SK-N-SH (cell line): ENCODE measurements at regions of chr11 and their contacts with region 1.

Region 1: GRCh38 chr11:128290106-128290840 is 297.1 kb downstream of the ETS1 start:
- DNase-seq: peak; percentile 68
- H3K4me3 ChIP-seq: no peak overlapping the region; a peak in 1 of 4 replicates
- H3K27ac ChIP-seq: peak overlapping the region; percentile 42 to 60; a peak in 3 of 4 replicates
- H3K4me1 ChIP-seq: peaks cover 0 to 16% of the 10 kb centered on the region in 2 experiments; a peak in 2 of 4 replicates
- H3K27me3 ChIP-seq: no peaks in the 10 kb centered on the region
- CTCF ChIP-seq: peak; percentile 87
- EP300 ChIP-seq: no peak; a peak in 1 of 4 replicates
- RAD21 ChIP-seq: peak; percentile 99

Region 2: DNA sequence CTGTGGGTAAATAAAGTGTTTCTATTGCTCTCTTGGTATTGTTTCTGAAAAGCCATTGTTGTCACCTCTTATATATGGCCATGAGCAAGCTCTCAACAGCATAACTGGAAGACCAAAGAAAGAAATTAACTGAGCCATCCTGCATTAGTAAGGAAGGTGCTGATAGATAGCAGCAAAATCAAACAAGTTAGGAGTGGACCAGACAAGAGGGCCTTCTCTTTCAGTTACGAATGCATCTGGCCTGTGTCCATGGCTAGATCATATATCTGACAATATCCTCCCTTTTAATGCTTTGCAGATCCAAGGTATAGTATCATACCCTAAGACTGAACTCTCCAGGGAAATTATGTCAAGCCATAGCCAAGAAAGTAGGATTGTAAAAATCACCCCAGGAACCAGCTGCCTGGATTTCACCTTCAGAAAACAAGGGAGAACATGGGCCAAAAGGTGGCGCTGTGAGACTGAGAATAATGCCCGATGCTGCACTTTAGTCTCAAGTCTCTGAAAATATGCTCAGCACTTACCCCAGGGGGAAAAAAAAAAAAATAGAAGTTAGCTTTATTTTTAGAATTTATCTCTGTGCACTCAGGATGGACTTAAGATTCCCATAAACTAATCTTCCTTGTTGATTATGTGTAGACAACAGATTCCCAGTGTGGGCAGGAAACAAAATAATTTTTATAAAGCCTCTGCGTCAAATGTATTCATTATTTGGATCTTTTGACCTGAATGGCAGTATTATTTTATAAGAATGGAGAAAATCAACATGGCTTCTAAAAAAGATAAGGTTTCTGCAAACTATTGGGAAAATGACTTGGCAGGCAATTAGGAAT is 118.0 kb before region 1 on chr11:
- CTCF ChIA-PET with region 1: interaction called, 33 read pairs
- POLR2A ChIA-PET with region 1: no interaction called
- DNase-seq: peak; percentile 73
- H3K4me3 ChIP-seq: no peak overlapping the region; a peak in 1 of 4 replicates
- H3K27ac ChIP-seq: peak overlapping the region in 1 of 2 experiments; percentile 50; a peak in 2 of 4 replicates
- H3K4me1 ChIP-seq: peaks cover 3 to 5% of the 10 kb centered on the region in 2 experiments; a peak in 2 of 4 replicates
- H3K27me3 ChIP-seq: no peaks in the 10 kb centered on the region
- CTCF ChIP-seq: peak; percentile 87
- EP300 ChIP-seq: no peak
- RAD21 ChIP-seq: peak; percentile 98

Region 3: DNA sequence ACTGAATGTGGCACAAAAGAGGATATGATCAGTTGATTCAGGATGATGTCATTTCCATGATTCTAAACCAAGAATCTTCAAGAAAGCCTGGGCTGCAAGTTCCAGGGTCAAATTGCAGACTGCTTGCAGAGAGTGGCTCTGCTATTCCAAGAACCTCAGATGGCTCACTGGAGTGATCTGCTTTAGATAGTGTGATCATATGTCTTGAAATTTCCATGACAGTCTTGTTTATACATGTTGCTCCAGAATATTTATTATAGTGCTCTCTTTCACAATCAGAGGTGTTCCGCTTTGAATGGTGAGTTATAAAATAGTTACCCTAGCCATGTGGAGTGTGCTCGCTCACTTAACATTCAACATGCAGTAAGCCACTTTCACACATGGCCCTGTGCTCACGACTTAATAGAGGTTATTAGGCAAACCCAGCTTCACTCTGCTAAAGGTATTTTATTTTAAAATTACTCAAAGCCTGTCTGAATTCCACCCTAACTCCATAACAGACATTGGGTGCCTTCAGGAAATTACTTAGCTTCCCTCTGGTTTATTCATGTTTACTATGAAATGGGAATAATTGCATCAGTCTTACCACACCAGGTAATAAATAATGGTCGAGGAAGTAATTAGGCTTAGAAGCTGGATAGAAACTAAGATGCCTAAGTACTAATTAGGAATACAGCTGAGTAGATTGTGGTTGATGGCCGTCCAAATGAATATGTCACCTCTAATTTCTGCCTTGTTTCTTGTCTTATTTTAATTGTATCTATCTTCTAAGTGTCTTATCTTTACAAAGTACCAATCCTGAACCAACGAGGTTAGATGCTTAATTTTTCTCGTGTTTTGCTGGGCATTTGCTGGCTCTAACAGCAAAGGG is 109.2 kb after region 1 on chr11:
- CTCF ChIA-PET with region 1: interaction called, 13 read pairs
- POLR2A ChIA-PET with region 1: no interaction called
- DNase-seq: no peak
- H3K4me3 ChIP-seq: no peak overlapping the region
- H3K27ac ChIP-seq: peak overlapping the region; percentile 93 to 94
- H3K4me1 ChIP-seq: peaks cover 13 to 35% of the 10 kb centered on the region in 2 experiments
- H3K27me3 ChIP-seq: no peaks in the 10 kb centered on the region
- CTCF ChIP-seq: no peak
- EP300 ChIP-seq: peak in 1 of 2 experiments; percentile 78; a peak in 2 of 4 replicates
- RAD21 ChIP-seq: no peak

Region 4: DNA sequence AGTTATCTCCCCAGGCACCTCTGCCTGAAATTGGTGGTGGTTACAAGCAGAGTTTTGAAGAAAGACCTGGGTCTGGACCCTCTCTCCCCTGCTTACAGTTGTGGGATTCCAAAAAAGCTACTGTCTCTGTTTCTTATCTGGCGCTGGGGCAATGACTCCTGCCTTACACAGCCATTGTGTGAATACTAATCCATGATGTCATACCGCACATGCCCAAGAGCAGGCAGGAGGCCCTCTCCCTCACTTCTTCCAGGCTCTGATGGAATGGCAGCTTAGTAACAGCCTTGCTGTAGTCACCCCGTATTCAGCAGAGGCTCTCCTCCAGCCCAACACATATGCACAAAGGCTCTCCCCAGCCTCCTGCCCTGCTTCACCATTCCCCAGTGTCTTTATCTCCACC is 131.3 kb after region 1 on chr11:
- CTCF ChIA-PET with region 1: interaction called, 14 read pairs
- POLR2A ChIA-PET with region 1: no interaction called
- DNase-seq: peak; percentile 28
- H3K4me3 ChIP-seq: no peak overlapping the region
- H3K27ac ChIP-seq: peak overlapping the region; percentile 60 to 98
- H3K4me1 ChIP-seq: peaks cover 22 to 56% of the 10 kb centered on the region in 2 experiments; a peak in 3 of 4 replicates
- H3K27me3 ChIP-seq: no peaks in the 10 kb centered on the region
- CTCF ChIP-seq: no peak
- EP300 ChIP-seq: 0 out of 4 replicates have a peak, but pooled peaks of 1 of the 2 experiments have one; percentile 2
- RAD21 ChIP-seq: no peak

Region 5: DNA sequence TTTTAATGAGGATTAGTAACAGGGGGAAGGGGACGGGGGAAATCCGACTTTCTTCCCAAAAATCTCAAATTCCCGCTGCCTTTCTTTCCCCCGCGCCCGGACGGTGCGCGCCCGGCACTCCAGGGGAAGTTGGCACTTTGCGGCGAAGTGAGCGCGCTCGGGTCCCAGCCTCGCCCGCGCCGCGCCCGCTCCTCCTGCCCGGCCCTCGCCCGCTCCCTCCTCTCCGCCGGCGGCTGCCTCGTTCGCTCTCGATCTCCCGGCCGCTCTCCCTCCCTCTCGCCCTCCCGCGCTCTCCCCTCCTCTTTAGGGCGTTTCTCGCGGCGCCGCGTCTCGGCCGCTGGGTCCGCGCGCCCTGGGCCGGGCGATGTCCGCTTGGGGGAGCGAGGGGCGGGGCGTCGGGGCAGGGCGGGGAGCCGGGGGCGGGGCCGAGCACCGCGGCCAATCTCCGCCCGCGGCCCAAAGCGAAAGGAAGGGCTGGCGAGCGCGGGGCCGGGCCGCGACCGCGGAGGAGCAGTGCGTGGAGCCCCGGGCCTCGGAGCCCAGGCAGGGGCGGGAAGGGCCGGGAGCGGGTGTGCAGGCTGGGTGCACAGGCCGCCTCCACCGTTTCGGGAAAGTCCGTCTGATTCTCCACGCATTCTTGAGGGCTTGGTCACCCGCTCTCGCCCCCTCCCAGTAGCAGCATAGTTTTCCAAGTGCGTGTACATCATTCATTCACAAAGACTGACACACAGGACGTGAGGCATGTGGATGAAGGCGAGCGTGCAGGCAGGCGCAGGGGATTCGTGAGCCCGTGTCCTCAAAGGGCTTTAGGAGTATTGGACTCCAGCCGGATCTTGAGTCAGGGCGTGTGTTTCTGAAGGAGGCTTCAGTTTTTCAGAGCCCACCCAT is 232.0 kb after region 1 on chr11:
- CTCF ChIA-PET with region 1: interaction called, 11 read pairs
- POLR2A ChIA-PET with region 1: no interaction called
- DNase-seq: peak; percentile 97
- H3K4me3 ChIP-seq: peak overlapping the region; percentile 89 to 91
- H3K27ac ChIP-seq: peak overlapping the region; percentile 90 to 97
- H3K4me1 ChIP-seq: peaks cover 24 to 46% of the 10 kb centered on the region in 2 experiments
- H3K27me3 ChIP-seq: no peaks in the 10 kb centered on the region
- CTCF ChIP-seq: no peak
- EP300 ChIP-seq: peak in 1 of 2 experiments; percentile 92; a peak in 2 of 4 replicates
- RAD21 ChIP-seq: peak; percentile 24

Region 6: GRCh38 chr11:128552783-128553661 is 262.7 kb after region 1 on chr11:
- CTCF ChIA-PET with region 1: interaction called, 11 read pairs
- POLR2A ChIA-PET with region 1: no interaction called
- DNase-seq: no peak
- H3K4me3 ChIP-seq: no peak overlapping the region
- H3K27ac ChIP-seq: no peak overlapping the region
- H3K4me1 ChIP-seq: no peaks in the 10 kb centered on the region; a peak in 1 of 4 replicates
- H3K27me3 ChIP-seq: no peaks in the 10 kb centered on the region
- CTCF ChIP-seq: no peak
- EP300 ChIP-seq: no peak
- RAD21 ChIP-seq: no peak

Region 7: DNA sequence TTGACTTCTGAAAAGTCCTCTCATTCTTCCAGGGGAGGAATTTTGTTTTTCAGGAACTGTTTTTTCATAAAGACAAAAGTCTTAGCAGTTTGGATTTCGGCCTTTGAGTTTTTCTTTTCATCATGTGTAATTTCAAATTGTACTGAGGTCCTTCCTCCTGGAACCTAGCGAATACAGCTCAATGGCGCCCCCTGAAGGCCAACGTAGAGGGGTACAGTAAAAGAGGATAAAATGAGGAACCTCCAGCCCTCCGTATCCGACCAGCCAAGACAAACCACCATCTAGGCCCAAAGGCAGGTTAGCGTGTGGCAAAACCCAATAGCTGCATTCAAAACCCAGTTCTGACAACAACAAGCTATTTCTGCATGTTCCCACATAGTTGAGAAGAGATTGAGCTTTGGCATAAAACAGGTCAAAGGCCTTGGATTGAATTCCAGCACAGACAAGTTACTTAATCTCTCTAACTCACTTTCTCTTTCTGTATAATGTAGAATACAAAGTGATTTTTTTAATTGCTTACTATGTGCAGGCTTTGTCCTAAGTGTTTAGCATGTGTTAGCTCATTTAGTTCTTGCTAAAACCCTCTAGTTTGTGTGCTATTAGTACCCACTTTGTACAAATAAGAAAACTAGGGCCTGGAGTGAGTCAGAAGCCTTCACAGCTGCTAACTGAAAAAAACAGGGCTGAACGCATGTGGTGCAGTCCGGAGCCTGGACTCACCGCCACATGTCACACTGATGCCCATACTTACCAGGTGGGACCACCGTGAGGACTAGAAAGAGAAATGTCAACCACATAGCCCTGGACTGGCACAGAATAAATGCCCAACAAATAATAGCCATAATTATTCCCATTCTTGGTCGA is 340.3 kb after region 1 on chr11:
- CTCF ChIA-PET with region 1: interaction called, 112 read pairs
- POLR2A ChIA-PET with region 1: no interaction called
- DNase-seq: peak; percentile 83
- H3K4me3 ChIP-seq: peak overlapping the region in 1 of 2 experiments; percentile 50; a peak in 1 of 4 replicates
- H3K27ac ChIP-seq: peak overlapping the region; percentile 27 to 50; a peak in 2 of 4 replicates
- H3K4me1 ChIP-seq: peaks cover 0 to 14% of the 10 kb centered on the region in 2 experiments; a peak in 2 of 4 replicates
- H3K27me3 ChIP-seq: no peaks in the 10 kb centered on the region
- CTCF ChIP-seq: peak; percentile 97
- EP300 ChIP-seq: no peak
- RAD21 ChIP-seq: peak; percentile 98